ENCODE measurements at regions of chr11 and their contacts with region 1.

Region 1: GRCh38 chr11:62030071-62030684 is 62.7 kb upstream of the FTH1 start:
- DNase-seq: peak; percentile 63
- H3K4me3 ChIP-seq: no peak overlapping the region
- H3K27ac ChIP-seq: no peak overlapping the region
- H3K4me1 ChIP-seq: no peaks in the 10 kb centered on the region
- H3K27me3 ChIP-seq: no peaks in the 10 kb centered on the region
- CTCF ChIP-seq: no peak

Region 2: DNA sequence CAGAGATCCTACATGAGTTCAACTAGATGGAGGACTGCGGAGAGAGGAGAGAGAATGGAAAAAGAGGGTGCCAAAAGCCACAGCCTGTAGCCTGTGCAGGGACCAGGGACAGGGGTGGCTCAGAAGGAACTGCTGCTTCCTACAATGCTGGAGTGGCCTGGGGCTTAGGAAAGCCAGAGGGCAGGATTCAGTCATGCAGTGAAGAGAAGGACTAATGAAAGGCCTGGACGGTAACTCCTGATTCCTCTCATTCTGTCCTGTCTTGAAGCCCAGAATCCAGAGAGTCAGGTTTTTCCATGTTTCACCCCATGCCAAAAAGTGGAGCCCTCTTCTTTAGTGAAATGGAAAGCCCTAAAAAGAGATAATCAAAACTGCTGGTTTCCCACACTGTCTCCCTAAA is 45.3 kb after region 1 on chr11:
- CTCF ChIA-PET with region 1: interaction called, 10 read pairs
- POLR2A ChIA-PET with region 1: interaction called, 3 read pairs
- intact Hi-C with region 1: no loop called
- DNase-seq: no peak
- H3K4me3 ChIP-seq: no peak overlapping the region
- H3K27ac ChIP-seq: no peak overlapping the region
- H3K4me1 ChIP-seq: no peaks in the 10 kb centered on the region
- H3K27me3 ChIP-seq: no peaks in the 10 kb centered on the region
- CTCF ChIP-seq: no peak